Pancreas (tissue), 10 donors: ENCODE measurements at regions of chr6 and their contacts with region 1.

Region 1: DNA sequence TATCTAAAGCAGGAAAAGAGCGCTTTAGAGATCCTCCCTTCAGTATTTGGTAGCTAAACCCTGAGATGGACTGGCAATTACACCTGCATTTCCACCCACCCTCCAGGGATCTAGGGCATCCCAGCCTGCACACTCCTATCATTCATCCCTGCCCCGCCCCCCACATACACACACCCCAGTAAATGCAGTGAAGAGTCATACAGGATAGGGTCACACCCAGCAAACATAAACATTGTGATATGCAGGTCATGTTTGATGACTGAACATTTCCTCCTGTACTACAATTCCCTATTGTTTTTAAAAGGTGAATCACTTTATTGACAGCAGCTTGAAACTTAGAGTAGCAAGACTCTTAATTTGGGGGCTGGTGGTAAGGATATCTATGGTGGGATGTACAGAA is 112.9 kb downstream of the FOXO3 start:
- DNase-seq: no peak
- ATAC-seq: no peak
- H3K4me3 ChIP-seq: no peak overlapping the region
- H3K27ac ChIP-seq: no peak overlapping the region
- H3K4me1 ChIP-seq: peaks cover 26 to 71% (median 52%) of the 10 kb centered on the region in 3 donors
- H3K27me3 ChIP-seq: no peaks in the 10 kb centered on the region
- CTCF ChIP-seq: no peak

Region 2: DNA sequence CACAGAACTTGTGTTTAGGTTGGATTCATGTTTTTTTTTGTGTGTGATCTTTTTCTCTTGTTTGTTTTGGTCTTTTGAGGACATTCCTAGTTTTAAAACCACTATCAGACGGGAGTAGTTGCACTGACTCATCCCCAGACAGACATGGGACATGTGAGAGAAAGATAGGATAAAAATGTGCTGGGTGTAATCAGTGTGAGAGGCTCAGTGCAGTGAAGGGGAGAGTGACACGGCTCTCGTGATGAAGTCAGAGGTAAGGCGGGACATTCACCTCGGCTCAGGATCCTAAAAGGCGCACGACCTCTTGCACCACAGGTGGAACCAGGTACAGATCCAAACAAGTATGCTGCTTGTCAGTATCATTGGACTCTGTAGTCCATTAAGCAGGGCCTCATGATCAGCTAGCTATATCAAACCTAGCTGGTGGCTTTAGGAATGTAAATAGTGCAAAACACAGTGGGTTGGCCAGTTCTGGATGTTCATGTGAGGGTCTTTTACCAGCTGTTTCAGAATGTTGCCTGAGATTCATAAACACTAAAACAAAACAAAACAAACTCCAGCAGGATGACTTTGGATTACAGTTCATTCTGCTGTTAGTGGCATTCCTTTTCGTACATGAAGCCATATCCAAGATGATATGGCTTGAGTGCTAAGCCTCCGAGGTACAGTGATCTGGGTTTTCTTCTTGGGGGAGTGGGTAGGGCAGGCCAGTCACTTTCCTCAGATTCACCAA is 94.8 kb before region 1 on chr6:
- intact Hi-C with region 1: loop called in 1 of 3 experiments (anchors 10 kb)
- DNase-seq: no peak
- ATAC-seq: no peak
- H3K4me3 ChIP-seq: no peak overlapping the region
- H3K27ac ChIP-seq: no peak overlapping the region
- H3K4me1 ChIP-seq: peaks cover 57 to 72% (median 61%) of the 10 kb centered on the region in 3 donors
- H3K27me3 ChIP-seq: no peaks in the 10 kb centered on the region
- CTCF ChIP-seq: no peak